Activated B cell treated with CpG ODN at 0.5 μM for 24 hours (primary cell): ENCODE measurements at regions of chr6 and their contacts with region 1.

Region 1: DNA sequence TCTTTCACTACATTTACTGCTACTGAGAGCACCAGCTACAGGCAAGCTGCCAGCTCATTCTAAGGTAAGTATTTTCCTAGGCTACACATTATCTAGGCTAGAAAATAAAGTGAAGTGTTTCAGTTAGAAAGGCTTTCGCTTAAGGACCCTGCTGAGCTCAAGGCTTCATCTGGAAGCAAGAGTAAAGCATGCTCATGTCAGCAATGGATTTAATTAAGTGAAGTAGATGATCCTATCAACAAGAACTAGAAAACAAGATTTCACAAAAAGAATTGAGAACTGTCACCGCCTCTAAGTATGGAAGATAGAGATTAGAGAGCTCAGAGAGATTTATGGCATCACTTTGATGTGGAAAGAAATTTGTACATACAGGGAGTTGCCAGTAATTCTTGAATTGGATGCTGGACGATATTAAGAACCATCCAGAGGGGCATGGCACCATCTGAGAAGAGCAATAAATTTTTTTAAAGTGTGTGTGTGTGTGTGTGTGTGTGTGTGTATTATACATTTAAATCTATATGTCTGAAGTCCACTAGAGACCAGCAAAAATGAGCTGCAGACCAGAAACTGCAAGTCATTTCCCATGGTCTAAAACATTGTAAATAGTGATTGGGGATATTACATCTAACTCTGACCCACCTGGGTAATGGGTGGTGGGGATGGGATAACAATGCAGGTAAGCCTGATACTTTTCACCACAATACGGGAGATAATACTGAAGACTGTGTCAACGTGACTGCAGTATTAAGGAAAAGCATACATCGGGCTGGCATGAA is 105.2 kb upstream of the MAP7 start:
- DNase-seq: no peak
- ATAC-seq: no peak
- H3K4me3 Mint-ChIP-seq: no peak overlapping the region
- H3K27ac Mint-ChIP-seq: no peak overlapping the region
- H3K4me1 Mint-ChIP-seq: no peaks in the 10 kb centered on the region
- H3K27me3 Mint-ChIP-seq: no peaks in the 10 kb centered on the region
- CTCF ChIP-seq: no peak

Region 2: DNA sequence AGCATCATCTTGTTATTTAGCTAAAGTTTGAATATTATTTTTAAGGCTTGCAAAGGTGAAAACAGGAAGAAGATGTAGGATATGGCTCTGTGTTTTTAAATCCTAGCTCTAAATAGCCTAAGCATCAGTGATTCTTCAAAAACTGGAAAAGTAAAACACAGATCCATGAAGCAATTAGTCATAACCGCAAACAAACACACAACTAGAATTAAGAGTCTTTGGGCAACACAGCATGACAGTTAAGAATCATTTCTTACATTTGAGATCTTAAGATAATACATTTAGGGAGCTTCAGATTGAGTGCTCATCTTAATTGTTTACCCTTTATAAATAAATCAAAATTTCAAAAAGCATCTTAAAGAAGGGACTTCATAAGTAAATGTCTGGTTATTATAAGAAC is 10.6 kb after region 1 on chr6:
- CTCF ChIA-PET with region 1: no interaction called
- POLR2A ChIA-PET with region 1: no interaction called
- intact Hi-C with region 1: loop called (anchors 2 kb)
- DNase-seq: no peak
- ATAC-seq: no peak
- H3K4me3 Mint-ChIP-seq: no peak overlapping the region
- H3K27ac Mint-ChIP-seq: no peak overlapping the region
- H3K4me1 Mint-ChIP-seq: no peaks in the 10 kb centered on the region
- H3K27me3 Mint-ChIP-seq: no peaks in the 10 kb centered on the region
- CTCF ChIP-seq: no peak

Region 3: GRCh38 chr6:136696238-136696637 is 40.8 kb after region 1 on chr6:
- CTCF ChIA-PET with region 1: no interaction called
- POLR2A ChIA-PET with region 1: no interaction called
- intact Hi-C with region 1: loop called (anchors 1 kb)
- DNase-seq: no peak
- ATAC-seq: no peak
- H3K4me3 Mint-ChIP-seq: no peak overlapping the region
- H3K27ac Mint-ChIP-seq: no peak overlapping the region
- H3K4me1 Mint-ChIP-seq: no peaks in the 10 kb centered on the region
- H3K27me3 Mint-ChIP-seq: no peaks in the 10 kb centered on the region
- CTCF ChIP-seq: no peak